Posterior vena cava (tissue), 2 donors: ENCODE measurements at regions of chr1 and their contacts with region 1.

Region 1: DNA sequence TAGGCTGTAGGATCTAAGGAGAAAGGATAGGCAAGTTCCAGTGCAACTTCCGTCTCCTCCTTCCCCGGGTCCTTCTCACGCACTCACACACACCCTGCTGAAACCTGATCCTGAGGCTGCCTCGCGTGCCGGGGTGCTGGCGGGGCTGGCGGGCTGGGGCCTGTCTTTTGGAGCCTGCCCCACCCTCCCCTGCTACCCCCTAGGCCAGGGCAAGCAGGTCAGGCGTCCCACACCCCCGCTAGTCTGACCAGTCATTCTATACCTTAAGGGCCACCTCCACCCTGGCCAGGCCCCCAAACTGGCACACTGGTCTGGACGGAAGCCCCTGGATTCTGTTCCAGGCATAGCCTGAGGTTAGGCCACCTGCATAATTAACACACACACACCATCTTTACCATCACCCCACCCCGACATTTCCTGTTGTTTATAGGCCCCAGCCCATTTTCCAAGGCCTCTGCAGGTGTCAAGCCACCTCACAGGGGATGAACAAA is 48.2 kb upstream of the ARTN start:
- DNase-seq: no peak

Region 2: GRCh38 chr1:43853161-43853921 is 32.0 kb before region 1 on chr1:
- intact Hi-C with region 1: loop called in 1 of 2 experiments (anchors 1 kb)
- DNase-seq: no peak